IMR-90 (cell line): ENCODE measurements at regions of chr14 and their contacts with region 1.

Region 1: DNA sequence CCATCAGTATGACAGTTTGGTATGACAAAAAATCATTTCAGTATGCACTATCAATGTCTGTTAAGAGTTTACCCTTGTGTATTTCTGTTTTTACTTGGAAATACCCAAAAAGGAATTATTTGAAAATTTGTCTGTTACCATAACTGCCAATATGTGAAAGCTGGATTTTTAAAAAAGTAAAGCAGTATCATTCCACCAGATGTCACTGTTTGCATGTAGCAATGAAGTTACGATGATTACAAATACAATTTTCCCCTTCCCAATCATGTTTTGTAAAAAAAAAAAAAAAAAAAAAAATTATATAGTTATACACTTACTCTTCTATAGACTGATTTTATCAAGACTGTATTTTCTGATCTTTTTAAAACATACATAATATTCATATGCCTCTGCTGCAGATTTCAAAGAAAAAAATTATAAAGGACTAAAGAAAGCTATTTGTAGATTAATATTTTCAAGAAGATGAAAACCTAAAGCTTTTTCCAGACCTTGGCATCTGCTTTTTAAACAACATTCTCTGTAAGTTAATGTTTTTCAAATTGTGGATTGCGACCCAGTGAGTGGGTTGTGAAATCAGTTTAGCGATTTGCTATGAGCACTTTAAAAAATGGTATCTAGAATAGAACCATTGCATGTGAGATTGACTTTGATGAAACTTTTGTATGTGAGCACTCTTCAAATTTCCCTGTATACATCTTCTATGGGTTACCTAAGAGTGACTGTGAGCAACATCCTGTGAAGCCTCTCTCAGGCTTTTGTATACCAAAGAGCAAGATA is 114.2 kb downstream of the TTC6 start:
- DNase-seq: peak; percentile 39
- ATAC-seq: 0 out of 2 replicates have a peak, but pooled peaks have one; percentile 21
- H3K4me3 ChIP-seq: no peak overlapping the region
- H3K27ac ChIP-seq: no peak overlapping the region
- H3K4me1 ChIP-seq: peaks cover 5% of the 10 kb centered on the region
- H3K27me3 ChIP-seq: no peaks in the 10 kb centered on the region
- CTCF ChIP-seq: peak; percentile 57
- POLR2A ChIP-seq: no peak
- RAD21 ChIP-seq: peak; percentile 62

Region 2: GRCh38 chr14:37230551-37231194 is 478.9 kb before region 1 on chr14:
- CTCF ChIA-PET with region 1: interaction called, 4 read pairs
- POLR2A ChIA-PET with region 1: no interaction called
- dilution Hi-C with region 1: no loop called
- in situ Hi-C with region 1: no loop called
- intact Hi-C with region 1: loop called (anchors 5 kb)
- DNase-seq: peak; percentile 77
- ATAC-seq: peak; percentile 85
- H3K4me3 ChIP-seq: no peak overlapping the region
- H3K27ac ChIP-seq: no peak overlapping the region
- H3K4me1 ChIP-seq: no peaks in the 10 kb centered on the region
- H3K27me3 ChIP-seq: no peaks in the 10 kb centered on the region
- CTCF ChIP-seq: peak; percentile 76
- POLR2A ChIP-seq: no peak
- RAD21 ChIP-seq: peak; percentile 55

Region 3: DNA sequence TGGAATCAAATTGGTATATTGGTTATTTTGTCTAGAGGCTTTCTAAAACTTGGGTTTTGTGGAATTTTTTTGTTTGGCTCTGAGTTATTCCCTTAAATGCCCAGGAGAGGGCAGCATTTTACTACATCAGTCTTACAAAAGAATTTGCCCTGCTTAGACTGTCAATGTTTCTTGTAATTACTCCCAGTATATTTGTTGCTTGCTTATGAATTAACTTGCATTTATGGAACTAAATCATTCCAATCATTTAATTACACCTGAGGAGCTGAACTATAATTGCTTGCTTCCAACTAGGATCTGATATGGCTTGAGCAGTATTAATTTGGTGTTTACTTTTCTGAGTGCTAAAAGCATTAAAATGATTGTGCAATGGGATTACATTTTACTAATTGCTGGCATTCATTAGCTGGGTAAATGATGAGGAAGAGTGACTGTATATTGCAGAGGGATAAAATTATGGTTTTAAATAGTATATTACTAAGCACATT is 463.1 kb before region 1 on chr14:
- CTCF ChIA-PET with region 1: no interaction called
- POLR2A ChIA-PET with region 1: no interaction called
- dilution Hi-C with region 1: no loop called
- in situ Hi-C with region 1: no loop called
- intact Hi-C with region 1: loop called (anchors 2 kb)
- DNase-seq: peak; percentile 63
- ATAC-seq: peak; percentile 68
- H3K4me3 ChIP-seq: no peak overlapping the region
- H3K27ac ChIP-seq: no peak overlapping the region
- H3K4me1 ChIP-seq: no peaks in the 10 kb centered on the region
- H3K27me3 ChIP-seq: no peaks in the 10 kb centered on the region
- CTCF ChIP-seq: peak; percentile 83
- POLR2A ChIP-seq: 0 out of 2 replicates have a peak, but pooled peaks have one; percentile 16
- RAD21 ChIP-seq: peak; percentile 84

Region 4: DNA sequence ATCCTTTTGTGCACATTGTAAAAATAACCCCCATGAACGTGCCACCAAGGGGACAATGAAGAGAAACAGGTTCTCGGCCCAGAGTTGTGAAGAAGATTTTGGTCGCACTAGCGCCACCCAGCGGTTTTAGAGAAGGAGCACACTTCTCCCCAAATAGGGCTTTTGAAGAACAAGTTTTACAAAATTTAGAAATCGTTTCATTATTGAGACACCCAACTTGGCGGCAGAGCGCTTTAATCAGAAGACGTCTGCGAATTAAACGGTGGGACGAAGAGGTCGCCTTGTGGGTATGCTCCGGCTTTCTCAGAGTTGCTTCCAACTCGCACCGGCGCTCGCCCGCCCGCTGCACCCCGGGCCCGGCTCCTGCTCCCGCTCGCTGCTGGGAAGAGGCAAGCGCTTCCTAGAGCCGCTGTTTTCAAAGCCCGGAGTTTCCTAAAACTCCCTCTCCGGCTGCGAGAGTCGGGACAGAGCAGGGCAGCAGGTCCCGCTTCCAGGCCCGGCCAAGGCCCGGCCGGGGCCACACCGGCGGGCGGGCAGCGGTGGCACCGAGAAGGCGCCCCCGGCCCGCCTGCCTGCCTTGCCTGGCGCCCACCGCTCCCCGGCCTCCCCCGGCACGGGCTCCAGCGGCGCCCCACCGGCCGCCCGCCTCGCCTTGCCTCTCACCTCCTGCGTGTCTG is 115.2 kb before region 1 on chr14:
- CTCF ChIA-PET with region 1: no interaction called
- POLR2A ChIA-PET with region 1: no interaction called
- dilution Hi-C with region 1: no loop called
- in situ Hi-C with region 1: no loop called
- intact Hi-C with region 1: loop called (anchors 5 kb)
- DNase-seq: peak; percentile 80
- ATAC-seq: peak; percentile 74
- H3K4me3 ChIP-seq: peak overlapping the region; percentile 69
- H3K27ac ChIP-seq: no peak overlapping the region
- H3K4me1 ChIP-seq: peaks cover 3% of the 10 kb centered on the region; the same call in 1 of the 2 replicates
- H3K27me3 ChIP-seq: peaks cover 76% of the 10 kb centered on the region
- CTCF ChIP-seq: peak; percentile 81
- POLR2A ChIP-seq: no peak
- RAD21 ChIP-seq: peak; percentile 64

Region 5: GRCh38 chr14:37874429-37875191 is 165.0 kb after region 1 on chr14:
- CTCF ChIA-PET with region 1: interaction called, 14 read pairs
- POLR2A ChIA-PET with region 1: no interaction called
- dilution Hi-C with region 1: no loop called
- in situ Hi-C with region 1: loop called (anchors 5 kb)
- intact Hi-C with region 1: loop called (anchors 1 kb)
- DNase-seq: peak; percentile 48
- ATAC-seq: peak; percentile 98
- H3K4me3 ChIP-seq: no peak overlapping the region
- H3K27ac ChIP-seq: no peak overlapping the region
- H3K4me1 ChIP-seq: no peaks in the 10 kb centered on the region
- H3K27me3 ChIP-seq: peaks cover 9% of the 10 kb centered on the region
- CTCF ChIP-seq: peak; percentile 84
- POLR2A ChIP-seq: no peak
- RAD21 ChIP-seq: peak; percentile 86

Region 6: DNA sequence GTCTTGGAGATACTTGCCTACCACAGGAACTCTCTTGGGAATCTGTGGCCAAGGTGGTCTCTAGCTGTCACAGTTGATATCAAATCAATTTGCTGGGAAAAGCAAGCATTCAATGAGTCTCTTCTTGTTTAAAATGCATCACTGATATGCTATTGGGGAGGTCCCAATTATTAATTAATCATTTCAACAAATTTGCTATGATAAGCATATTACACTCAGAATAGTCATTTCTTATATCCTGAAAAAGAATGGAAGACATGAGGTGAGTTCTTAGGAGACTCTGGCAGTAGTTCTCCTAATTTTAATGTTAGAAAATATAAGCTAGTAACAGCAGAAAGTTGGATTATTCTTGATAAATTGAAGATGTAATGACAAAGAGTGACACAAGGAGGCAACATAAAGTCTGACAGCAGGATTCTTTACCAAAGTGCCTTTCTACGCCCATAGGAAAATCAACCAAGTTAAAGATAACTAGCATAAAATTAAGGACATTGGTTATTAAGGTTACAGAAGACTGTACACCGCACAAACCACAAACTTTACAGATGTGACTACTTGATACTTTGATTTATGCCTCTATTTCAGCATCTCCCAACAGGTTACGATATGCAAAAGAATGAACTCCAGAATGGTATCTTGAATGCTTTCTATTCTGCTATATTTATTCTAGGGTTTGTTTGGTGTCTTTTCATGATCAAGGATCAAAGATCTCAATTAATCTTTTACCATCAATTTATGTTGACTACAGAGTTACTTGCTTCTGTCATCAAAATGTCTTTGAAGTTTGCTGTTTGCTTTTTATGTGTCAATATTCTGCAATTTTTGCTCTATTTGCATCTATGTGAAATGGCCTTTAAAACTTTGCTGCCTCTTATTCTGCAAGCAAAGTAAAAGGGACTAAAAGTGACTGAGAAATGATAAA is 895.8 kb after region 1 on chr14:
- CTCF ChIA-PET with region 1: no interaction called
- POLR2A ChIA-PET with region 1: no interaction called
- dilution Hi-C with region 1: no loop called
- in situ Hi-C with region 1: no loop called
- intact Hi-C with region 1: loop called (anchors 5 kb)
- DNase-seq: no peak
- ATAC-seq: no peak
- H3K4me3 ChIP-seq: no peak overlapping the region
- H3K27ac ChIP-seq: no peak overlapping the region
- H3K4me1 ChIP-seq: no peaks in the 10 kb centered on the region
- H3K27me3 ChIP-seq: no peaks in the 10 kb centered on the region
- CTCF ChIP-seq: 0 out of 2 replicates have a peak, but pooled peaks have one; percentile 7
- POLR2A ChIP-seq: no peak
- RAD21 ChIP-seq: no peak